ENCODE measurements at regions of chr17 and their contacts with region 1.

Region 1: DNA sequence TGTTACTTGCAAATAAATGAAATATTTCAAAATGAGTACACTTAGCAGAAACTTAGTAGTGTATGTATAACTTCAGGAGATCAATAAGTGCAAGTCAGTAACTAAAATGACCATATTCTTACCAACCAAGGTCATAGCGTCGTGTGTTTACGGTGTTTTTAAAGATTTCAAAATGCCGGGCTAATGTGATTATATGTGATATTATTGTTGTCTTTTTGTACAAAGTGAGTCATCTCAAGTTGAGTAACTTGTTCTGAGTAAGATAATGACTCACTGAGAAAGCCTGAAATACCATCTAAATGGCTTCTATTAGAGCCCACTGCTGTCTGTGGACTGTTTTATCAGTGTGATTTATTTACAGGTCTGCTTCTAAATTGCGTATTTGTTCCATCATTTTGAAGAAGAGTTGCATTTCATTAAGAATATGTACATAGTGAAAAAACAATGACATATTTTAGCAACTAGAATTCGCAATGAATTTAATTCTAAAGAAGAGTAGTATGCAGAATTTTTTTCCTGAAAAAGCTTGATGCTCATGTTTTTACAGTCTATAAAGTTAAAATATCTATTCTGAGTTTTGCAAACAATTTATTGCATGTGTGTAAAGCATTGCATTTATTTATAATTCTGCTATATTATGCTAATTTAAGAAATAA is 12.7 kb downstream of the KRT12 start:
- DNase-seq: peak; percentile 31 to 66 (median 38)
- ATAC-seq: peak; percentile 76
- H3K4me3 ChIP-seq: no peak overlapping the region
- H3K27ac ChIP-seq: peak overlapping the region; percentile 66; the same call in 1 of the 3 replicates
- H3K4me1 ChIP-seq: peaks cover 0 to 19% of the 10 kb centered on the region in 2 experiments; a peak in 3 of 5 replicates
- H3K27me3 ChIP-seq: no peaks in the 10 kb centered on the region
- CTCF ChIP-seq: no peak
- EP300 ChIP-seq: peak; percentile 80
- POLR2A ChIP-seq: no peak
- RAD21 ChIP-seq: no peak

Region 2: DNA sequence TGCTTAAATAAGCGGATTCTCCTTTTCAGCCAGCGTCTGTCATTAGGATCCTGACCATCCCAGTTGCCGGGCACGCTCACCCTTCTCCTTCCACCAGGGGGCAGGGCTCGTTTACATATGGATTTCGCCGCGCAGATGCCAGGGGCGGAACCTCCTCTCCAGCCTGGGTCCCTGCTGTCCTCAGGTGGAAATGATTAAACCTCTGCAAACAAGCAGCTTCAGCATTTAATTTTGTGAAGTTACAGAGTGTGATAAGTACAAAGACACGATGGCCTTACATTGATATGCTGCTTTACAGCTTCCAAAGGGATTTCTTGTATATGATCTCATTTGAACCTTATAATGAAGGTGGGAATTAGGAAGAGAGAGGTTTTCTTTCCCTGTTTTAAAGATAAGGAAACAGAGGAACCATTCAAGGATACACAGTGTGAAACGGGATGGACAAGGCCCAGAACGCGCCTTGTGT is 50.6 kb before region 1 on chr17:
- CTCF ChIA-PET with region 1: no interaction called
- POLR2A ChIA-PET with region 1: no interaction called
- in situ Hi-C with region 1: no loop called
- intact Hi-C with region 1: loop called (anchors 2 kb)
- DNase-seq: peak; percentile 85 to 88 (median 86)
- ATAC-seq: peak; percentile 98
- H3K4me3 ChIP-seq: no peak overlapping the region
- H3K27ac ChIP-seq: no peak overlapping the region
- H3K4me1 ChIP-seq: no peaks in the 10 kb centered on the region
- H3K27me3 ChIP-seq: peaks cover 3 to 14% of the 10 kb centered on the region in 2 experiments; a peak in 4 of 5 replicates
- CTCF ChIP-seq: peak; percentile 90 to 93 (median 93)
- EP300 ChIP-seq: no peak
- POLR2A ChIP-seq: no peak
- RAD21 ChIP-seq: peak; percentile 90 to 96

Region 3: GRCh38 chr17:40841246-40841645 is 13.0 kb before region 1 on chr17:
- CTCF ChIA-PET with region 1: no interaction called
- POLR2A ChIA-PET with region 1: interaction called, 12 read pairs
- in situ Hi-C with region 1: no loop called
- intact Hi-C with region 1: no loop called
- DNase-seq: peak; percentile 27 to 66 (median 51)
- ATAC-seq: peak; percentile 90
- H3K4me3 ChIP-seq: no peak overlapping the region
- H3K27ac ChIP-seq: no peak overlapping the region; the same call in 2 of the 3 replicates
- H3K4me1 ChIP-seq: peaks cover 12 to 49% of the 10 kb centered on the region in 2 experiments
- H3K27me3 ChIP-seq: no peaks in the 10 kb centered on the region
- CTCF ChIP-seq: 0 out of 6 replicates have a peak, but pooled peaks of 1 of the 3 experiments have one; percentile 6
- EP300 ChIP-seq: no peak
- POLR2A ChIP-seq: no peak
- RAD21 ChIP-seq: no peak

Region 4: DNA sequence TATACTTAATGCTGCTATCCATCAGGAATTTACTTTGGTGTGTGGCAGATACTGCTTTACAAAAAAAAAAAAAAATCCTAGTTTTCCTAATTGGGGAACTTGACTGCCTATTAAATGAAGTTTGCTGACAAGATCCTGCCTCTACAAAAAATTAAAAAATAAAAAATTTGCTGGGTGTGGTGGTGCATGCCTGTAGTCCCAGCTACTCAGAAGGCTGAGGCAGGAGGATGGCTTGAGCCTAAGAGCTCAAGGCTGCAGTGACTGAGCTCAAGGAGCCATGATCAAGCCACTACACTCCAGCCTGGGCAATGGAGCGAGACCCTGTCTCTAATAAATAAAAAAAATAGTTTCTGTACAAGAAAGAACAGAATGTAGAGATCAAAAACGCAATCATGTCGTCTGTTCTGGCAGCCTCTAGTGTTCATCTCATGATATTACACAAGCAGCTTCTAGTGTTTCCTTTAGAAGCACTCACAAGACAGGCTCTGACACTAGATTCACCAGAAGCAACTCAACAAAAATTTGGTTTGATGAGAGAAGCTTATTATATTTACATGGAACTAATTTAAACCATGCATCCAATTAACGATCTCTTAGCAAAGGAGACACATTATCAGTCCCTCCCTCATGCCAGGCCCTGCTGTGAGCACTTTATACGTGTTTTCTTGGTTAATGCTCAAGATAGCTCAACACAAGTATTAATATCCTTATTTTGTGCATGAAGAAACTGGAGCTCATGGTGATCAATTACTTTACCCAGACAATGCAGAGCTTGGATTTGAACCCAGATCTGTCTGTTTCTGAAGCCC is 468.0 kb after region 1 on chr17:
- CTCF ChIA-PET with region 1: interaction called, 4 read pairs
- POLR2A ChIA-PET with region 1: no interaction called
- in situ Hi-C with region 1: no loop called
- intact Hi-C with region 1: loop called (anchors 2 kb)
- DNase-seq: peak; percentile 17 to 42 (median 30)
- ATAC-seq: peak; percentile 57; the same call in 2 of the 3 replicates
- H3K4me3 ChIP-seq: no peak overlapping the region
- H3K27ac ChIP-seq: no peak overlapping the region
- H3K4me1 ChIP-seq: no peaks in the 10 kb centered on the region
- H3K27me3 ChIP-seq: peaks cover 0 to 2% of the 10 kb centered on the region in 2 experiments; a peak in 2 of 5 replicates
- CTCF ChIP-seq: peak; percentile 45 to 70 (median 69); a peak in 5 of 6 replicates
- EP300 ChIP-seq: no peak
- POLR2A ChIP-seq: no peak
- RAD21 ChIP-seq: peak in 1 of 2 experiments; percentile 74; a peak in 3 of 4 replicates